Transverse colon (tissue), 4 donors: ENCODE measurements at regions of chr6 and their contacts with region 1.

Region 1: GRCh38 chr6:38415231-38416005 is 224.3 kb downstream of the BTBD9 start:
- DNase-seq: no peak
- H3K4me3 ChIP-seq: no peak overlapping the region
- H3K27ac ChIP-seq: no peak overlapping the region
- H3K4me1 ChIP-seq: no peaks in the 10 kb centered on the region
- H3K27me3 ChIP-seq: no peaks in the 10 kb centered on the region
- CTCF ChIP-seq: no peak
- EP300 ChIP-seq: no peak
- POLR2A ChIP-seq: no peak

Region 2: DNA sequence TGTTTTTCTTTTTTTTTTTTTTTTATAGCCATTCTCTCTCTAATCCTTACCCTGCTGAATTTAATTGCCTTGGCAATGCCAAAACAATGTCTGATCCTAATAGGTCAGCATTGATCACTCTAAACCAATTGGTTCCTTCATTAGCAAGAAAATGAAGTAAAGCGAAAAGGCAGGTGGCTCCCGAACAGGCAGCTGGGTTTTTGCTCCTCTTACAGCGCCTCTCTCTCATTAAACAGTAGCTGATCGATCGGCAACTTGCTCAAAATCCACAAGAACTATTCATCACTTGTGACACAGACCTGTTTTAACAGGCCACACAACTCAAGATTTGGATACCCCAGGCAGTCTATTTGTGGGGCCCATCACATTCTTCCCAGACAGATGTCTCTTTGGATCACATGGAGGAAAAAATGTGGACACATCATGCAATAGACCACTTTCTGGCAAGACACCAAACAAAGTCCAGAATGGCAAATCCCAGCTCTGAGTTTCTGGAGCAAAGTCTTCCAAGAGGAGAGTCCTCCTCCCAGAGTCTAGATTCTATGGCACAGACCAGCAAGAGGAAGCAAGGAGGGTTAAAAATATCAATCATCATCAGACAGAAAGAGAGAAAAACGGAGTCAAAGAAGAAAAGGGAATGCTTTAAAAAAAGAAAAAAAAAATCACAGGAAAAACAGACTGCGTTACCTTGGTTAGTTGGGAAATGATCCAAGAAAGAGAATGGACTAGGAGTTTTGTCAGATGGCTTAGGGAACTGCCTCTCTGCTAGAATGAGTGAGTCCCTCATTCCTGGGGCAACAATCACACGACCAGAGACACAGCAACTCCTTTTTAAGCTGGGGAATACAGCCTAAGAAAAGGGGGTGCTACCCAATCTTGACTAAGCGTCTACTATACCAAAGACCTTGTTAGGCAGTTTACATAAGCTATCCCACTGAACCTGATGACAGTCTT is 23.5 kb before region 1 on chr6:
- in situ Hi-C with region 1: no loop called
- intact Hi-C with region 1: loop called (anchors 2 kb)
- DNase-seq: no peak
- H3K4me3 ChIP-seq: no peak overlapping the region
- H3K27ac ChIP-seq: no peak overlapping the region
- H3K4me1 ChIP-seq: no peaks in the 10 kb centered on the region
- H3K27me3 ChIP-seq: no peaks in the 10 kb centered on the region
- CTCF ChIP-seq: no peak
- EP300 ChIP-seq: no peak
- POLR2A ChIP-seq: no peak

Region 3: GRCh38 chr6:38467566-38467965 is 52.1 kb after region 1 on chr6:
- in situ Hi-C with region 1: no loop called
- intact Hi-C with region 1: no loop called
- DNase-seq: no peak
- H3K4me3 ChIP-seq: no peak overlapping the region
- H3K27ac ChIP-seq: no peak overlapping the region
- H3K4me1 ChIP-seq: no peaks in the 10 kb centered on the region
- H3K27me3 ChIP-seq: no peaks in the 10 kb centered on the region
- CTCF ChIP-seq: no peak
- EP300 ChIP-seq: no peak
- POLR2A ChIP-seq: no peak